Keratinocyte (primary cell): ENCODE measurements at regions of chr1 and their contacts with region 1.

Region 1: GRCh38 chr1:181424786-181425403 is 58.4 kb upstream of the CACNA1E start:
- DNase-seq: peak; percentile 11
- H3K4me3 ChIP-seq: no peak overlapping the region
- H3K27ac ChIP-seq: no peak overlapping the region
- H3K4me1 ChIP-seq: no peaks in the 10 kb centered on the region
- H3K27me3 ChIP-seq: peaks cover 4% of the 10 kb centered on the region
- CTCF ChIP-seq: peak; percentile 73 to 99 (median 89)

Region 2: DNA sequence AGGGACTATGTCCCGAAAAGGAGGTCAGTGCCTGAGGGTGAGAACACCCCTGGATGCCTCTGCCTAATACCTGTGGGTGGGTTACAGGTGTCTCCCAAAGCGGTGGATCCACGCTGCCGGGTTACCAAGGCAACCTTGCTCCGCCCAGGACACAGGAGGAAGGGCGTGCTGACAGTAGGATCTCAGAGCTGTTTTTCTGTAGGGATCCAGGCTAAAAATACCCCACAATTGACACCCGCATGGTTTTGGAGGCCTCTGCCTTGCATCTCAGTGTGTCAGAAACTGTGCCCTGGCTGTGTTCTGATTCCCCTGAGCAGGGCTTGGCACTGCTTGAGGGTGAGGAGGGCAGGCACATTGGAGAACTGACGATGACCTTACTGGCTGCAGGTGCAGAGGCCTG is 218.4 kb before region 1 on chr1:
- dilution Hi-C with region 1: loop called (anchors 25 kb)
- DNase-seq: no peak
- H3K4me3 ChIP-seq: no peak overlapping the region
- H3K27ac ChIP-seq: no peak overlapping the region
- H3K4me1 ChIP-seq: no peaks in the 10 kb centered on the region
- H3K27me3 ChIP-seq: peaks cover 13% of the 10 kb centered on the region
- CTCF ChIP-seq: no peak

Region 3: GRCh38 chr1:181318022-181318857 is 106.7 kb before region 1 on chr1:
- dilution Hi-C with region 1: loop called (anchors 25 kb)
- DNase-seq: no peak
- H3K4me3 ChIP-seq: peak overlapping the region in 1 of 3 experiments; percentile 4
- H3K27ac ChIP-seq: no peak overlapping the region
- H3K4me1 ChIP-seq: no peaks in the 10 kb centered on the region
- H3K27me3 ChIP-seq: peaks cover 78% of the 10 kb centered on the region
- CTCF ChIP-seq: no peak

Region 4: GRCh38 chr1:181366910-181367309 is 58.0 kb before region 1 on chr1:
- dilution Hi-C with region 1: no loop called
- DNase-seq: no peak
- H3K4me3 ChIP-seq: no peak overlapping the region
- H3K27ac ChIP-seq: no peak overlapping the region
- H3K4me1 ChIP-seq: no peaks in the 10 kb centered on the region
- H3K27me3 ChIP-seq: no peaks in the 10 kb centered on the region
- CTCF ChIP-seq: no peak